Mammary epithelial cell (primary cell): ENCODE measurements at regions of chr15 and their contacts with region 1.

Region 1: GRCh38 chr15:45198337-45199135 is 10.8 kb upstream of the SHF start:
- DNase-seq: peak; percentile 96
- H3K4me3 ChIP-seq: peak overlapping the region; percentile 63 to 90 (median 81)
- H3K27ac ChIP-seq: peak overlapping the region; percentile 42
- H3K4me1 ChIP-seq: peaks cover 16% of the 10 kb centered on the region
- H3K27me3 ChIP-seq: no peaks in the 10 kb centered on the region
- CTCF ChIP-seq: peak; percentile 53 to 83

Region 2: DNA sequence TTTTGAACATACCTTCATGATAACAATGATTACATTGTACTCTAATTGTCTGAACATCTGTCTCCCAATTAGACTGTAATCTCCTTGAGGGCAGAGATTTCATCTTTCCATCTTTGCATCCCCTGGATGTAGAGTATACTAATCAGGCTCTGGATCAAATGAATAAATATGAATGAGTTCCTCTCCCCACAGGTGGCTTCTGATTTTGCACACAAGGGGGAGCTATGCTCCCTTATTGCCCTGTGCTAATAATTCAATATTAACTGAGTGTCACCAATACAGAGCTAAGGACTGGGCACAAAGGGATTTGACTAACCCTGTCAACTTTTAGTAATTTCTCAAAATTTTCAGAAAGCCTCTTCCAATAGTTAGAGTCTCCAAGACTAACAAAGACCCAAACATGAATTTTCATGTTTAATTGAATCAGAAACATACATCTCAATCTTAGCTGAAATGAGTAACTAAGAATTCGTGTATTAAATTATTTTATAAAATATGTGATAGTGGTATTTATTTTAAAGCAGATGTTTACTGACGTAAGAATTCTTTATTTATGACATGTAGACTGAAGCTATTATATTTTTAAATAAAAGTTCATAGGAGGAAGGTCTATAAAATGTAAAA is 71.9 kb before region 1 on chr15:
- CTCF ChIA-PET with region 1: interaction called, 9 read pairs
- dilution Hi-C with region 1: no loop called
- in situ Hi-C with region 1: loop called in 1 of 2 experiments (anchors 10 kb)
- intact Hi-C with region 1: loop called (anchors 1 kb)
- DNase-seq: peak; percentile 35
- H3K4me3 ChIP-seq: no peak overlapping the region
- H3K27ac ChIP-seq: no peak overlapping the region
- H3K4me1 ChIP-seq: peaks cover 21% of the 10 kb centered on the region
- H3K27me3 ChIP-seq: no peaks in the 10 kb centered on the region
- CTCF ChIP-seq: peak; percentile 85 to 90

Region 3: DNA sequence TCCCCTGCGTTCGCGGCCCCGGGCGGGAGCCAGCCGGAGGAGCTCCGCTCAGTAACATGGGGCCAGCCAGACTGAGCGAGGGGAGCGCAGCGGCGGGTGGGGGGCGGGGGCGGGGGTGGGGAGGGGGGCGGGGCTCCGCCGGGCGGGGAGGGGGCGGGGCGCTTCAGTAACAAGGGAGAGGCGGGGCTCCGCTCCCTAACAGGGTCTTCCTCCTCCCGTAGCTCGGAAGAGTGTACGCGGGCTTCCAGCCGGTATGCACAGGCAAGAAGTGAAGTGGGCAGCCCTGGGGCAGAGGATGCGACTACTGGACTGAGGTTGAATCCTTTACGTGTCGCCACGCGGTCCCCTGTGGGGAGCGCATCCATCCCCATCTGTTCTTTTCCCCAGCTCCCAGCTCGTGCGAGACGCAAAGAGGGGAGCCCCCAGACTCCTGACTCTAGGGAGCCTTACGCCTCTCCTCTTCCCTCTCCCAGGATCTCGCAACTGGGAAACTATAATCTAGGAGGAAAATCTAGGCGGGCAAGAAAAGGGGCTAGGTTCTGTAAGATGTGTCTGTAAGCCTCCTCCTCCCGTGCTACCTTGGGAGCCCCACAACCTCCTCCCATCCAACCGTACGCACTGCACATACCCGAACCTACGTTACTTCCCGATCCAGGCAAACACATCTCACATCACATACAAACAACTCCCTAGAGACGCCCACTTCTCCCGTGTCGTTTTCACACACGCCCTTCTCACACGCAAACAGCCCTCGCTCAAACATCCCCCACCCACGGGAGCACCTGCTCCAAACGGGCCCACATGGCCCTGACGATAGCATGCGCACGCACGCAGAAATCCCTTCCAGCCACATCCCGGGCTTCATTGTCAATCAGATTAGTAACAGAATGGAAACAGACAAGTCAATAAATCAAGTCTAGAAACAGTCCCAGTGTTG is 10.4 kb before region 1 on chr15 and contains the start of gene SHF:
- CTCF ChIA-PET with region 1: interaction called, 4 read pairs
- dilution Hi-C with region 1: no loop called
- in situ Hi-C with region 1: no loop called
- intact Hi-C with region 1: loop called (anchors 1 kb)
- DNase-seq: no peak
- H3K4me3 ChIP-seq: peak within 1 kb of the TSS; percentile 48 to 59 (median 56)
- H3K27ac ChIP-seq: no peak within 1 kb of the TSS
- H3K4me1 ChIP-seq: peaks cover 6% of the 10 kb centered on the region
- H3K27me3 ChIP-seq: no peaks in the 10 kb centered on the region
- CTCF ChIP-seq: no peak
- total RNA-seq, gene SHF: 0.50 to 1.3 TPM

Region 4: GRCh38 chr15:45268135-45268534 is 69.6 kb after region 1 on chr15:
- CTCF ChIA-PET with region 1: no interaction called
- dilution Hi-C with region 1: no loop called
- in situ Hi-C with region 1: no loop called
- intact Hi-C with region 1: no loop called
- DNase-seq: peak; percentile 52
- H3K4me3 ChIP-seq: no peak overlapping the region
- H3K27ac ChIP-seq: no peak overlapping the region
- H3K4me1 ChIP-seq: no peaks in the 10 kb centered on the region
- H3K27me3 ChIP-seq: no peaks in the 10 kb centered on the region
- CTCF ChIP-seq: peak; percentile 35 to 50

Region 5: DNA sequence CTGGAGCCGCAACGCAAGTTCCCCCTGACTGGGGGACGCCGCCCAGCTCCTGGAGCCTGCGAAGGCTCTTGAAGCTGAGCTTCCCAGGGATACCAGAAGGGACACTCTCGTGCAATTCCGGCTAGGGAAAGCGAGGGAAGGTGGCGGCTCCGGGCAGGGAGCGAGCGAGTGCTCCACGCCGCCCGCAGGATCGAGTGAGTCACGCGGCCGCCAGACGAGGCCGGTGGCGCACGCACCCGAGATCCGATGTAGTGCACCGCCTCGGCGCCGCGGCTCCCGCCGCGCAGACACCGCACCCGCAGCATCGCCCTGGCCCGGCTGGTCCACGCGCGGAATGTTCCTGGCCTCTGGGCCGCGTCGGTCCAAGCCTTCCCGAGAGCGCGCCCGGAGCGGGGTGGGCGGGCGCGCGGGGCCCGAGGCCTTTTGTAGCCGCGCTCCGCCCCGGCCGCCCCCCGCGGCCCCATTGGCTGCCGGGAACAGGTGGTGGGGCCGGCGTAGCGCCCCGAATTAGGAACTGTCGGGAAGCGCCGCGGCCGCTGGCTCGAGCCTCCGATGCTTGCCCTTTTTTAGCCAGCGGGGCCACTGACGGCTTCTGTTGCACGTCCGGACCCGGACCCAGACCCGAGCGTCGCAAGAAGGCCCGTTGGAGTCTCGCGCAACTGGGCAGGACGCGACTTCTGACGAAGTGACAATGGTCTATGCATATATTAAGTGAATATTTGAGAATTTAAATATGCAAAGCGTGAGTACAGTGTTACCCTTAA is 179.8 kb after region 1 on chr15 and contains the start of gene GATM:
- CTCF ChIA-PET with region 1: no interaction called
- dilution Hi-C with region 1: loop called (anchors 10 kb)
- in situ Hi-C with region 1: no loop called
- intact Hi-C with region 1: no loop called
- DNase-seq: peak; percentile 75
- H3K4me3 ChIP-seq: peak within 1 kb of the TSS; percentile 33 to 48 (median 41)
- H3K27ac ChIP-seq: no peak within 1 kb of the TSS
- H3K4me1 ChIP-seq: peaks cover 15% of the 10 kb centered on the region
- H3K27me3 ChIP-seq: peaks cover 20% of the 10 kb centered on the region
- CTCF ChIP-seq: peak; percentile 47 to 62
- total RNA-seq, gene GATM: 1.4 to 4.5 TPM

Region 6: DNA sequence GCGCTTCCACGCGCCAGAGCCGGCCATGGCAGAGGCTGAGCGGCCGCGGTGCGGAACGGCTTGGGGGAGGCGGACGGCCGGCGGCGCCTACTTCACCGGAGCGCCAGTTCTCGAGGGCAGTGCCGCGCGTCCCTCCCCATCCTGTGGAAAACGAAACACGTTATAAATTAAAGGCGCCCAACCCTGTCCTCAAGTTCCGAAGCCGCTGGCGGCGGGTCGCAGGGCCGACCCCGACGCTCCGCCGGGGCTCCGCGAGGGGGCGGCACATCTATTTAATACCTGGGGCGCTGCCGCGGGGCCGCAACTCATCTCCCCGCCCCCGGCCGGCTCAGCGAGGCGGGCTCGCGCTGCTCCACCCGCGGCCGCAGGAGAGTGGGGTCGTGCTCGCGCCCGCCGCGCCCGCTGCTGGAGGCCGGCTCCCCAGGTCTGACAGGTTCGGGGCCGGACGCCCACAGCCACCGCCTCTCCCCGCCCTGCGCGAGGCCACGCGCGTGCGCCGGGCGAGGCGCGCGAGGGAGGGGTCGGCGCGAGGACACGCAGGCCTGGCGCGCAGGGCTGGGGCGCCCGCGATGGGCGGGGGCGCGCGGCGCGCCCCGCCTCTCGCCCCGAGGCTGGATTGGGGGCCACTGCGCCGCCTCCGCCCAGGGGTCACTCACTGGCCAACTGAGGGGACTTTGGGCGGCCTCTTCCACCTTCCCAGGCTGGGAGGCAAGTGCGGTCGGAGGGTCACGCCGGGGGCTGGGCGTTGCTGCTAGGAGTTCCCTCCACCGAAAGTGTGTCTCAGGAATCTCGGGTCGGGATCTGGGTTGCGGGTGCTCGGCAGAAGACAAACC is 324.0 kb after region 1 on chr15 and contains the start of gene SLC30A4:
- CTCF ChIA-PET with region 1: no interaction called
- dilution Hi-C with region 1: no loop called
- in situ Hi-C with region 1: no loop called
- intact Hi-C with region 1: loop called (anchors 2 kb)
- DNase-seq: peak; percentile 49
- H3K4me3 ChIP-seq: peak within 1 kb of the TSS; percentile 40 to 85 (median 66)
- H3K27ac ChIP-seq: peak within 1 kb of the TSS; percentile 22
- H3K4me1 ChIP-seq: peaks cover 19% of the 10 kb centered on the region
- H3K27me3 ChIP-seq: no peaks in the 10 kb centered on the region
- CTCF ChIP-seq: peak in 1 of 2 donors; percentile 38
- total RNA-seq, gene SLC30A4: 6.8 to 11.2 TPM